CD4-positive, alpha-beta T cell (primary cell): ENCODE measurements at regions of chr9 and their contacts with region 1.

Region 1: DNA sequence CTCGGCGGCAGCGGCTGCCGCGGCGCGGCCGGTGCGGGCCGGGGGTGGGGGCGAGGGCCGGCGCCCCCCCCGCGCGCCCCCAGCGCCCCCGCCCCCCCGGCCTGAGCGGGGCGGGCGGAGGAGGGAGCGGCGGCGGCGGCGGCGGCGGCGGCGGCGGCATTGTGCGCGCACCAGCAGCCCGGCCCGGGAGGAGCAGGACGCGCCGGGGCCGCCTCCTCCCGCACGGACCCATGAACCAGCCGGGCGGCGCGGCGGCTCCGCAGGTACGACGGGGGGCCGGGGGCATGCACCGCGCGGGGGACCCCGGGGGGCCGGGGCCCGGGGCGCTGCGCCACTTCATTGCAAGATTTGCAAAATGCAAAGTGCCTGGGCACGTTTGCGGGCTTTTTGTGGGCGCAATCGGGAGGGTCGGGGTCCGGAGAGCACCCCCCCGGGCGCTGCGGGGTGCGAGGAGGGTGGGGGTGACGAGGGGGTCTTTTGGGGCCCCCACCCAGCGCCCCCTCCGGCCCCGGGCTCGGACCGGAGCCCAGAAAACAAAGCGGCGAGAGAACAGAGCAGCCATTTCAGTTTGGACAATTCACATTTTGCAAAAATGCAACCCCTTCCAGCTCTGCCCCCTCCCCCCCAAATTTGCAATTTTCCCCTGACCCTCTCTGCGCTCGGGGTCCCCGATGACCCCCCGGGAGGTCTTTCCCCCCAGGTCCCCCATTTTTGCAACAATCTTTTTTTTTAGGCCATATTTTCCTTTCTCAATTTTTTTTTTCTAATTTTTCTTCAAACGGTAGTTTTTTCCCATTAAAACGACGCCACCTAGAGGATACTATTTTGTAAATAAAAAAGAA is at the start of gene ZNF618:
- DNase-seq: peak in 8 of 14 experiments; percentile 1 to 48 (median 20)
- ATAC-seq: peak; percentile 58
- H3K4me3 ChIP-seq: peak within 1 kb of the TSS; percentile 62
- H3K4me3 Mint-ChIP-seq: peak within 1 kb of the TSS; percentile 97
- H3K27ac ChIP-seq: no peak within 1 kb of the TSS
- H3K27ac Mint-ChIP-seq: no peak within 1 kb of the TSS
- H3K4me1 ChIP-seq: peaks cover 3% of the 10 kb centered on the region
- H3K4me1 Mint-ChIP-seq: peaks cover 7% of the 10 kb centered on the region
- H3K27me3 ChIP-seq: peaks cover 3 to 4% of the 10 kb centered on the region in 2 experiments
- H3K27me3 Mint-ChIP-seq: peaks cover 36% of the 10 kb centered on the region
- CTCF ChIP-seq: peak; percentile 64
- total RNA-seq, gene ZNF618: 1.2 to 1.3 TPM

Region 2: GRCh38 chr9:113807173-113808061 is 69.0 kb before region 1 on chr9:
- CTCF ChIA-PET with region 1: no interaction called
- POLR2A ChIA-PET with region 1: no interaction called
- intact Hi-C with region 1: loop called in 1 of 2 experiments (anchors 2 kb)
- DNase-seq: peak in 7 of 14 experiments; percentile 1 to 57 (median 28)
- ATAC-seq: no peak
- H3K4me3 ChIP-seq: no peak overlapping the region
- H3K4me3 Mint-ChIP-seq: no peak overlapping the region
- H3K27ac ChIP-seq: no peak overlapping the region
- H3K27ac Mint-ChIP-seq: no peak overlapping the region
- H3K4me1 ChIP-seq: peaks cover 4% of the 10 kb centered on the region
- H3K4me1 Mint-ChIP-seq: no peaks in the 10 kb centered on the region
- H3K27me3 ChIP-seq: peaks cover 3% of the 10 kb centered on the region in 2 experiments
- H3K27me3 Mint-ChIP-seq: peaks cover 30% of the 10 kb centered on the region
- CTCF ChIP-seq: peak; percentile 77